BJ (cell line): ENCODE measurements at regions of chr18 and their contacts with region 1.

Region 1: DNA sequence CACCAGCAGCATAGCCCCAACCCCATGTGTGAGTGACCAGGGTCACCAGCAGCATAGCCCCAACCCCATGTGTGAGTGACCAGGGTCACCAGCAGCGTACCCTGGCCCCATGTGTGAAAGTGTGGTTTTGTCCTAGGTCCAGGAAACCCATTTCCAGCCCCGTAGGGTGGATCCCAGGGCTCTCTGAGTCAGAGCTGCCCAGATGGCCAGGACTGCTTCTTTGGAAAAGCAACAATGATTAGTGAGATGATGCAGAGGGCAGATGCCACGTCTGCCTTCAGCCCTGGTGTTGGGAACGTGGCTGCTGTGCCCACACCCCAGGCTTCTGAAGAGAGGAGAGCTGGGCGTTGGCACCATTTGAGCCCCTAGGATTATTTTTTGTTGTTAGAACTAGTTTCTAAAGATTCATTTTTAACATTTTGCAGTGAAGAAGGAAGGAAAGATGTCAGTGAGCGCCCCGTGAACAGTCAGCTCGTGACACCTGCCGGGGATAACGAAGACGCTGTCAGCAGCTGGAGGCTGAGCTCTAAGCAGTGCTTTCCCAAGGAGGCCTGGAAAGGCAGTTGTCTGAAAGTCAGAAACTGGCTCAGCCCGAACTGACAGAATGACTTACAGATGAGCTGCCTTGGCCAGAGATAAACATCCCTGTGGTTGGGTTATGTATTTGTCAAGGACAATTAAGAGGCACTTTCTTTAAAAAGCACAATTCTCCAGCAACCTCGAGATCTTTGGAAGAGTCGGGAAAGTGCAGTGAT is 32.1 kb upstream of the KCNG2 start:
- DNase-seq: peak; percentile 3
- H3K4me3 ChIP-seq: no peak overlapping the region
- H3K27me3 ChIP-seq: peaks cover 7% of the 10 kb centered on the region; the same call in 1 of the 2 replicates
- CTCF ChIP-seq: no peak

Region 2: DNA sequence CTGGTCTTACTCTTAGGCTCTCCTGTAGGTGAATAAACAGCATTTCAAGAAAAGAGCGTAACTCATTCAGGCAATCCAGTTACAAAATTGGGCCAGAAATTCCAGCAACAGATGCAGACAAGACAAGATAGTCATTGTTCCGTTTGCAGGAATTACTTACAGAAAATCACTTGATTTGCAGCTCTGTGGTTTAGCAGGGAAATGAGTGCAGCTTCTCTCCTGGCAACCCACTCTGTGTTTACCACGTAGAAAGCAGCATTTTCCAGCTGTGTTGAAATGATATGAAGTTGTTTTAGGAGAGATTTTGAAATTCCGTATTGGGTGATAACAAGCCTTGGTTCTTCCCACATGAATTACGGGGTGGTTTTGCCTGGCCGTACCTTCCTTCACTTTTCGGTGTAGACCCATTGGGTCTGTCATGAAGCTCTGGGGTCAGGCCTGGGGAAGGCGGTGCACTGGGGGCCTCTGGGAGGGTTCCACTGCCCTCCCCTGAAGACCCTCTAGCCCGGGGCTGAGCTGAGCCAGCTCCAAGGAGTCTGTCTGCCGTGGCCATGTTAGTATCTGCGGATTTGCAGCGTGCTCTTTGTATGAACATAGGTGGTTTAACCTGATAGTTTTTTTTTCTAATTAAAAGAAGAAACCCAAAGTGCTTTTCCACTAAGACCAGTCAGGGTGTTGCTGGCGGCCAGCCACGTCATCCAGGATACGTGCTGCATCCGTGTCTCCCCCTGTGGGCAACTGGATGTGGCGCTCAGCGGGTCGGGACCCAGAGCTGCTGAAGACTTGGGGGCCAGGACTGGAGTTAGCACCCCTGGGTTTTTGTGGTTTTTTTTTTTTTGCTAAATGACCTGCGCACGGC is 26.9 kb before region 1 on chr18:
- CTCF ChIA-PET with region 1: no interaction called
- POLR2A ChIA-PET with region 1: interaction called, 13 read pairs
- DNase-seq: no peak
- H3K4me3 ChIP-seq: no peak overlapping the region
- H3K27me3 ChIP-seq: no peaks in the 10 kb centered on the region
- CTCF ChIP-seq: no peak